Left ventricle myocardium inferior (tissue), 1 donor: ENCODE measurements at regions of chr19 and their contacts with region 1.

Region 1: GRCh38 chr19:1103708-1104310 is at the start of gene GPX4:
- DNase-seq: peak; percentile 99
- H3K4me3 ChIP-seq: peak within 1 kb of the TSS; percentile 95
- H3K27ac ChIP-seq: peak within 1 kb of the TSS; percentile 99
- H3K4me1 ChIP-seq: peaks cover 83% of the 10 kb centered on the region
- H3K27me3 ChIP-seq: no peaks in the 10 kb centered on the region
- CTCF ChIP-seq: no peak
- total RNA-seq, gene GPX4: 327 TPM

Region 2: GRCh38 chr19:887072-887471 is 216.7 kb before region 1 on chr19:
- intact Hi-C with region 1: no loop called
- DNase-seq: no peak
- H3K4me3 ChIP-seq: no peak overlapping the region
- H3K27ac ChIP-seq: no peak overlapping the region
- H3K4me1 ChIP-seq: peaks cover 3% of the 10 kb centered on the region
- H3K27me3 ChIP-seq: no peaks in the 10 kb centered on the region
- CTCF ChIP-seq: no peak

Region 3: DNA sequence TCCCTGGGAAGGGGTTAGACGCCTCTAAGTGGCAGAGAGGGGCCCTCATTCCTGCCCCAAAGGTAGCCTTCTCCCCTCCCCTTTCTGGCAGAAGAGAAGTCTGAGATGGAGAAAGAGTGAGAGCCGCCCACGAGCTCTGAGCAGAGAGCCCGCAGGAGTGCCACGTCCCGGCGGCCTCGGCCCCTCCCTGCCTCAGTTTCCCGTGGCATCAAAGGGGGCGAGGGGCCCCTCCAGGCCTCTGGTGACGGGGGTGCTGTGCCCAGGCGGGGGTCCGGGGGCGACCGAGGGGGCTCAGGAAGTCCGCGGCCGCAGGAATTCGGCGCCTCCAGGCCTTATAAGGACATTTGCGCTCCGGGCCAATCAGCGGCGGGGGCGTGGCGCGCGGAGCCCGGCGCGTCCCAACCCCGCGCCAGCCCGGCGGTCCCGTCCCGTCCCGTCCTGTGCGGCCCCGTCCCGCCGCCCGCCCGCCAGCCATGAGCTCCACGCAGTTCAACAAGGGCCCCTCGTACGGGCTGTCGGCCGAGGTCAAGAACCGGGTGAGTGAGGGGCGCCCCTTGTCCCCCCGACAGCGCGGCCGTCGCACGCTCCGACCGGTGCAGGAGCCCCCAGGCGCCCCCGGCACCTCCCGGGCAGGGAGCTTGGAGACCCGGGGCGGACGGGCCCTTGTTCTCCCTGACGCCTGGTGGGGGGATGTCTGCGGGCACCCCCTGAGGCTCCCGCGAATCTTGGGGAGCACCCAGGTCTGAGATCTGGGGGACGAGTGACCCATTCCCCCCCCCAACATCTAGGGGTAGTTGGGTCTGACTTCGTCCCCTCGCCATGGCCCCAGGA is 77.4 kb before region 1 on chr19 and contains the start of gene CNN2:
- intact Hi-C with region 1: loop called (anchors 5 kb)
- DNase-seq: peak; percentile 84
- H3K4me3 ChIP-seq: peak within 1 kb of the TSS; percentile 84
- H3K27ac ChIP-seq: peak within 1 kb of the TSS; percentile 94
- H3K4me1 ChIP-seq: peaks cover 70% of the 10 kb centered on the region
- H3K27me3 ChIP-seq: no peaks in the 10 kb centered on the region
- CTCF ChIP-seq: no peak
- total RNA-seq, gene CNN2: 45.6 TPM

Region 4: DNA sequence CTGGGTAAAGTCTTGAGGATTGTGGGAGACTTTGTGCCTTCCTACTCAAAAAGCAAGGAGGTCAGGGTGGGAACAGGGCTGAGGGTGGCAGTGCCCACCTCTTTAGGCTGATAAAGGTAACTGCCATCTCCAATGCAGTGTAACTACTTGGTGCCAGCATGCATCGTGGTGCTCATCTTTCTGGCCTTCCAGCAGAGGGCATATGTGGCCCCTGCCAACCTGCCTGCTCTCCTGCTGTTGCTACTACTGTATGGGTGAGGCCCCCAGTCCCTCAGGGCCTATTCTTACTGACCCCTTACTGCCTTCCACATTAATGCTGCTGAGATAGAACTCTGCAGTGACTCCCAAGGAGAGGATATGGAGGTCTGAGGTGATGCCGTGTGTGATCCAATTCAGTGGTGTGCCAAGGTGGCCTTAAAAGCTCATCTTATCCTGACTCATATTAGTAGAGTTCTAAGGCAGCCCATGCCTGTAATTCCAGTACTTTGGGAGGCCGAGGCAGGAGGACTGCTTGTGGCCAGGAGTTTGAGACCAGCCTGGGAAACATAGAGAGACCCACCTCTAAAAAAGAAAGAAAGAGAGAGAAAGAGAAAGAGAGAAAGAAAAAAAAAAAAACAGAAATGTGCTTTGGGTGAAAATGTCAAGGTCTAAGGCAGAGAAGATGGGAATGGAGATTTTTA is 46.5 kb before region 1 on chr19:
- intact Hi-C with region 1: no loop called
- DNase-seq: no peak
- H3K4me3 ChIP-seq: no peak overlapping the region
- H3K27ac ChIP-seq: no peak overlapping the region
- H3K4me1 ChIP-seq: no peaks in the 10 kb centered on the region
- H3K27me3 ChIP-seq: no peaks in the 10 kb centered on the region
- CTCF ChIP-seq: no peak